Panc1 (cell line): ENCODE measurements at regions of chr11 and their contacts with region 1.

Region 1: GRCh38 chr11:65773784-65774411 is 6.9 kb downstream of the AP5B1 start:
- DNase-seq: no peak
- ATAC-seq: 0 out of 2 replicates have a peak, but pooled peaks have one; percentile 9
- H3K4me3 ChIP-seq: no peak overlapping the region
- H3K27ac ChIP-seq: no peak overlapping the region
- H3K4me1 ChIP-seq: peaks cover under 1% of the 10 kb centered on the region; the same call in 1 of the 2 replicates
- H3K27me3 ChIP-seq: no peaks in the 10 kb centered on the region
- CTCF ChIP-seq: peak; percentile 57

Region 2: GRCh38 chr11:65850831-65851811 is 77.2 kb after region 1 on chr11:
- CTCF ChIA-PET with region 1: interaction called, 14 read pairs
- POLR2A ChIA-PET with region 1: no interaction called
- in situ Hi-C with region 1: no loop called
- intact Hi-C with region 1: no loop called
- DNase-seq: no peak
- ATAC-seq: peak; percentile 59
- H3K4me3 ChIP-seq: no peak overlapping the region
- H3K27ac ChIP-seq: no peak overlapping the region
- H3K4me1 ChIP-seq: peaks cover 33% of the 10 kb centered on the region
- H3K27me3 ChIP-seq: no peaks in the 10 kb centered on the region
- CTCF ChIP-seq: peak; percentile 91